ENCODE measurements at regions of chr17 and their contacts with region 1.

Region 1: GRCh38 chr17:14300575-14301278 is at the start of gene HS3ST3B1:
- DNase-seq: peak; percentile 97 to 99
- H3K4me3 ChIP-seq: peak within 1 kb of the TSS; percentile 73 to 75
- H3K27ac ChIP-seq: peak within 1 kb of the TSS; percentile 85
- H3K4me1 ChIP-seq: peaks cover 68% of the 10 kb centered on the region
- H3K27me3 ChIP-seq: no peaks in the 10 kb centered on the region
- CTCF ChIP-seq: no peak
- POLR2A ChIP-seq: peak in 1 of 2 donors; percentile 64
- total RNA-seq, gene HS3ST3B1: 5.9 TPM

Region 2: GRCh38 chr17:13594762-13595598 is 705.7 kb before region 1 on chr17:
- intact Hi-C with region 1: loop called (anchors 10 kb)
- DNase-seq: no peak
- H3K4me3 ChIP-seq: no peak overlapping the region
- H3K27ac ChIP-seq: peak overlapping the region; percentile 58
- H3K4me1 ChIP-seq: no peaks in the 10 kb centered on the region
- H3K27me3 ChIP-seq: no peaks in the 10 kb centered on the region
- CTCF ChIP-seq: peak; percentile 45 to 81 (median 64)
- POLR2A ChIP-seq: no peak

Region 3: GRCh38 chr17:13735444-13735843 is 565.3 kb before region 1 on chr17:
- intact Hi-C with region 1: loop called (anchors 5 kb)
- DNase-seq: no peak
- H3K4me3 ChIP-seq: no peak overlapping the region
- H3K27ac ChIP-seq: no peak overlapping the region
- H3K4me1 ChIP-seq: no peaks in the 10 kb centered on the region
- H3K27me3 ChIP-seq: no peaks in the 10 kb centered on the region
- CTCF ChIP-seq: no peak
- POLR2A ChIP-seq: no peak

Measured in vagina (tissue), 2 donors.